Endothelial cell of umbilical vein (primary cell): ENCODE measurements at regions of chr1 and their contacts with region 1.

Region 1: DNA sequence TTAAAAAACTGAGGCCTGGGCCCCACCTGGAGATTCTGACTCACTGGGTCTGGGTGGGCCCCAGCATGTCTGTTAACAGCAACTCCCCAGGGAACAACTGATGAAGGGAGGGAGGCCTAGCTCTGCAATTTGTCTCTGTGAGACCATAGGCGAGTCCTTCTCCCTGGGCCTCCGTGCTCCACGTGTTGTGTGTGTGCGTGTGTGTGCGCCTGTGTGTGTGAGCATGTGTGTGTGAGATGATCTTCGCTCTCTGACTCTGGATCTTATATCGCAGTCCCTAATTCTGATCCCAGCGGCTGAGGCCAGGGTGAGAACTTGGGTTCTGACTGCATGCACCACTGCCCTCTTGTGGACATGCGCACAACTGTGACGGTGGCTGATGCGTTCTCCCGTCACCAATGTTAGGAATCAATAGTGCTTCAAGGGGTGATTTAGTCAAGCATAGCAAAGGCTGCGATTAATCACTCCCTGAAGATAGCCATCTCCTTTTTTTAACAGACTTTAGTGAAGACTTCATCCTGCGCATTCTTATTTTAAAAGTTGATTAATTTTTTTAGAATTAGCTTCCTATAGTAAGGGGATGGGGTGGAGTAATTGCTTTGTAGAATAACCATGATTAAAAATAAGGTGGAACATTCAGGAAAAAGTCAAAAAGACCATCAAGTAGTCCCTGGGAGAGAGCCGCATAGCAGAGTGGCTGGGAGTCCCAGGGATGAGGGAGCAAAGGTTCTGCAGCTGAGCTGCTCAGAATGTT is 62.4 kb upstream of the USP24 start:
- DNase-seq: peak; percentile 66
- H3K4me3 ChIP-seq: no peak overlapping the region
- H3K27ac ChIP-seq: no peak overlapping the region
- H3K4me1 ChIP-seq: peaks cover 15% of the 10 kb centered on the region
- H3K27me3 ChIP-seq: no peaks in the 10 kb centered on the region
- CTCF ChIP-seq: peak; percentile 82 to 83
- POLR2A ChIP-seq: no peak

Region 2: GRCh38 chr1:54950369-54951163 is 327.0 kb before region 1 on chr1:
- CTCF ChIA-PET with region 1: interaction called, 10 read pairs
- POLR2A ChIA-PET with region 1: no interaction called
- dilution Hi-C with region 1: no loop called
- intact Hi-C with region 1: no loop called
- DNase-seq: peak; percentile 87
- H3K4me3 ChIP-seq: no peak overlapping the region
- H3K27ac ChIP-seq: peak overlapping the region; percentile 15
- H3K4me1 ChIP-seq: peaks cover 25% of the 10 kb centered on the region
- H3K27me3 ChIP-seq: peaks cover 0 to 1% of the 10 kb centered on the region in 2 experiments
- CTCF ChIP-seq: peak; percentile 71 to 79
- POLR2A ChIP-seq: no peak

Region 3: GRCh38 chr1:55071477-55071876 is 206.1 kb before region 1 on chr1:
- CTCF ChIA-PET with region 1: interaction called, 34 read pairs
- POLR2A ChIA-PET with region 1: no interaction called
- dilution Hi-C with region 1: no loop called
- intact Hi-C with region 1: loop called (anchors 2 kb)
- DNase-seq: peak; percentile 63
- H3K4me3 ChIP-seq: no peak overlapping the region
- H3K27ac ChIP-seq: no peak overlapping the region
- H3K4me1 ChIP-seq: no peaks in the 10 kb centered on the region
- H3K27me3 ChIP-seq: no peaks in the 10 kb centered on the region
- CTCF ChIP-seq: peak; percentile 16 to 49
- POLR2A ChIP-seq: no peak

Region 4: GRCh38 chr1:55127827-55128343 is 149.7 kb before region 1 on chr1:
- CTCF ChIA-PET with region 1: interaction called, 19 read pairs
- POLR2A ChIA-PET with region 1: no interaction called
- dilution Hi-C with region 1: no loop called
- intact Hi-C with region 1: no loop called
- DNase-seq: peak; percentile 39
- H3K4me3 ChIP-seq: no peak overlapping the region
- H3K27ac ChIP-seq: peak overlapping the region; percentile 13
- H3K4me1 ChIP-seq: peaks cover 21% of the 10 kb centered on the region
- H3K27me3 ChIP-seq: no peaks in the 10 kb centered on the region
- CTCF ChIP-seq: no peak
- POLR2A ChIP-seq: no peak

Region 5: GRCh38 chr1:55140546-55140983 is 137.0 kb before region 1 on chr1:
- CTCF ChIA-PET with region 1: interaction called, 82 read pairs
- POLR2A ChIA-PET with region 1: no interaction called
- dilution Hi-C with region 1: no loop called
- intact Hi-C with region 1: loop called (anchors 1 kb)
- DNase-seq: peak; percentile 82
- H3K4me3 ChIP-seq: no peak overlapping the region
- H3K27ac ChIP-seq: no peak overlapping the region
- H3K4me1 ChIP-seq: peaks cover 7% of the 10 kb centered on the region
- H3K27me3 ChIP-seq: no peaks in the 10 kb centered on the region
- CTCF ChIP-seq: peak; percentile 67 to 76
- POLR2A ChIP-seq: no peak

Region 6: GRCh38 chr1:55159571-55159970 is 118.0 kb before region 1 on chr1:
- CTCF ChIA-PET with region 1: interaction called, 12 read pairs
- POLR2A ChIA-PET with region 1: no interaction called
- dilution Hi-C with region 1: no loop called
- intact Hi-C with region 1: no loop called
- DNase-seq: no peak
- H3K4me3 ChIP-seq: no peak overlapping the region
- H3K27ac ChIP-seq: no peak overlapping the region
- H3K4me1 ChIP-seq: no peaks in the 10 kb centered on the region
- H3K27me3 ChIP-seq: no peaks in the 10 kb centered on the region
- CTCF ChIP-seq: no peak
- POLR2A ChIP-seq: no peak

Region 7: DNA sequence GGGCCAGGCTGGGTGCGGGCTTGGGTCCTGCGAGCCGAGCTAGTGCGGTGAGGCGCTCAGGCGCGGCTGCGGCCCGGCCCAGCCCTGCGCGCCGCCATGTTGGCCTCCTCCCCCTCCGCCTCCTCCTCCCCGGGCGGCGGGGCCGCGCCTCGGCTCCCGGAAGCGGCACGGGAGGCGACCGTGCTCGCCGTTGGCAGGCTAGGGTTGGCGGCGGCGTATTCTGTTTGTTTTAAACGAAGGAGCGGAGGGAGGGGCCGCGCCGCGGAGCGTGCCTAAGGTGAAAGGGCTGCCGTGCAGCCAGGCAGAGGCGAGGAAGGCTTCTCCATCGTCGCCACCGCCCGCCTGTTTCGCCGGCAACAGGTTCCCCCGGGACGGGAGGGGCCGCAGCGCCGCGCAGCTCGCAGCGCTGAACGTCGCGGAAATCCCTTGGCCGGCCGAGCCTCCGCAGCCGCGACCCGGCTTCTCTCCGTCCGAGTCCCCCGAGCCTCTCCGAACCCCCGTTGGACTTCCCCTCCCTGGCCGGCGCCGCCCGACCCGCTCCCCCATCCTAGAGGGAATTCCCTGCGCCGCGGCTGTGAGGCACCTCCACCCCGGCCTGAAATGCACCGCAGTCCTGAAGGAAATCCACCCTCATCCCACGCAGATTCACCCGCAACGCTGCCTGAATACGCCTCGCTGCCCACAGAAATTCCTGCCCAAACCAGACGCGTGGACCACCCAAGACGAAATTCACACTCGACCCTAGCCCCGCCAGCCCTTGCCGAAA is 62.1 kb before region 1 on chr1 and contains the start of gene USP24:
- CTCF ChIA-PET with region 1: interaction called, 3 read pairs
- POLR2A ChIA-PET with region 1: no interaction called
- dilution Hi-C with region 1: no loop called
- intact Hi-C with region 1: loop called (anchors 2 kb)
- DNase-seq: peak; percentile 69
- H3K4me3 ChIP-seq: peak within 1 kb of the TSS; percentile 46 to 79 (median 49)
- H3K27ac ChIP-seq: peak within 1 kb of the TSS; percentile 34
- H3K4me1 ChIP-seq: peaks cover 17% of the 10 kb centered on the region
- H3K27me3 ChIP-seq: no peaks in the 10 kb centered on the region
- CTCF ChIP-seq: no peak
- POLR2A ChIP-seq: peak; percentile 72
- total RNA-seq, gene USP24: 30.0 and 32.6 TPM in 2 replicates